Ascending aorta (tissue), 2 donors: ENCODE measurements at regions of chr4 and their contacts with region 1.

Region 1: GRCh38 chr4:99088481-99089365 is at the start of gene ADH5:
- DNase-seq: peak; percentile 46 to 92
- H3K4me3 ChIP-seq: peak within 1 kb of the TSS; percentile 87 to 95
- H3K27ac ChIP-seq: peak within 1 kb of the TSS; percentile 97 to 98
- H3K4me1 ChIP-seq: peaks cover 0 to 15% of the 10 kb centered on the region in 2 donors
- H3K27me3 ChIP-seq: no peaks in the 10 kb centered on the region
- CTCF ChIP-seq: no peak
- total RNA-seq, gene ADH5: 93.4 TPM

Region 2: GRCh38 chr4:98193459-98194105 is 895.1 kb before region 1 on chr4:
- intact Hi-C with region 1: no loop called
- DNase-seq: no peak
- H3K4me3 ChIP-seq: no peak overlapping the region
- H3K27ac ChIP-seq: no peak overlapping the region
- H3K4me1 ChIP-seq: no peaks in the 10 kb centered on the region
- H3K27me3 ChIP-seq: no peaks in the 10 kb centered on the region
- CTCF ChIP-seq: no peak

Region 3: DNA sequence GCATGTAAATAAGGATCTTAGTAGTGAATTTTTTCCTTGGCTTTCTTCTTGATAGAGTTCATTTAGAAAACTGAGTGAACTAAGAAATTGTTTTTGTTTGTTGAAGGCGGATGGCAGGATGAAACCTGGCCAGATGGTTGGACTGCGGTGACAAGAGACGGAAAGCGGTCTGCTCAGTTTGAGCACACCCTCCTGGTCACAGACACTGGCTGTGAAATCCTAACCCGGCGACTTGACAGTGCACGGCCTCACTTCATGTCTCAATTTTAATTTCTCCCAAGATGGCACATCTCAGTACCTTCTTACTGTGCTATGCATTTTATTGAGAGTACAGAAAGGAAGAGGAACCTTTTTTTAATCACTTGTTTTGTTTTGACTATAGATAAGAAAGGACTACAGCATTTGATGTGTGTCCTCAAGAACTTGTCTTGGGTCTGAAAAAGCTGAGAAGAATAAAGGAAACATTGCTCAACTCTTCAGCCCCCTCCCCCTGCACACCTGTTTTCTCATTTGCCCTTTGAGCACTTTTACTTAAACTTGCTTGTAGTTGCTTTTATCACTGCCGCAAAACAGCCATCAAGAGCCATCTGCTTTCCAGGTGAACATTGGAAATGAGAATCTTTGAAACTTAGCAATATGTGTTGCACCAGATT is 27.5 kb before region 1 on chr4:
- intact Hi-C with region 1: loop called (anchors 2 kb)
- DNase-seq: no peak
- H3K4me3 ChIP-seq: no peak overlapping the region
- H3K27ac ChIP-seq: peak overlapping the region; percentile 32 to 47
- H3K4me1 ChIP-seq: peaks cover 0 to 7% of the 10 kb centered on the region in 2 donors
- H3K27me3 ChIP-seq: no peaks in the 10 kb centered on the region
- CTCF ChIP-seq: no peak